H1 (cell line): ENCODE measurements at regions of chr11 and their contacts with region 1.

Region 1: GRCh38 chr11:10925144-10925926 is 67.5 kb upstream of the ZBED5 start:
- DNase-seq: no peak
- H3K4me3 ChIP-seq: no peak overlapping the region
- H3K27ac ChIP-seq: no peak overlapping the region
- H3K4me1 ChIP-seq: peaks cover 0 to 5% (median 1%) of the 10 kb centered on the region in 4 experiments; a peak in 3 of 7 replicates
- H3K27me3 ChIP-seq: peaks cover 0 to 7% (median 6%) of the 10 kb centered on the region in 4 experiments; a peak in 5 of 7 replicates
- CTCF ChIP-seq: no peak
- EP300 ChIP-seq: no peak
- POLR2A ChIP-seq: no peak
- RAD21 ChIP-seq: no peak

Region 2: DNA sequence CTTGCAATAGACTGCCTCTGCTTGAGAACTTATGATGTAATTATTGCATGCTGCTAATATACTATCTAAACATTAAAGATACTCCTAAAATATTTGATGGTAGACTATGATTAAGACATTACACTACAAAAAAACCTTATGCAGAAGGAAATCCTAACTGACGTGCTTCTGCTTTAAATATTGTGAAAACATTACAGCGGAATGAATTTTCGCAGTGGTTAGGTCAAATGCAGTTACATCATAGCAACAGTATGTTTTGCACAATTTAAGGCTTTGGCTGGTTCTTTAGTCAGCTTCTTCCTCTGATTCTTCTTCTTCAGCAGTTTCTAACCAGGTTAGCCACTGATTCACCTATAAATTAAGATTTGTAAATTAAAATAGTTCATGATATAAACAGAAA is 127.8 kb before region 1 on chr11:
- CTCF ChIA-PET with region 1: interaction called, 12 read pairs
- POLR2A ChIA-PET with region 1: interaction called, 11 read pairs
- DNase-seq: no peak
- H3K4me3 ChIP-seq: no peak overlapping the region
- H3K27ac ChIP-seq: no peak overlapping the region
- H3K4me1 ChIP-seq: peaks cover 0 to 3% (median 2%) of the 10 kb centered on the region in 4 experiments; a peak in 2 of 7 replicates
- H3K27me3 ChIP-seq: peaks cover 0 to 2% (median 0%) of the 10 kb centered on the region in 4 experiments; a peak in 2 of 7 replicates
- CTCF ChIP-seq: no peak
- EP300 ChIP-seq: no peak
- POLR2A ChIP-seq: no peak
- RAD21 ChIP-seq: no peak

Region 3: DNA sequence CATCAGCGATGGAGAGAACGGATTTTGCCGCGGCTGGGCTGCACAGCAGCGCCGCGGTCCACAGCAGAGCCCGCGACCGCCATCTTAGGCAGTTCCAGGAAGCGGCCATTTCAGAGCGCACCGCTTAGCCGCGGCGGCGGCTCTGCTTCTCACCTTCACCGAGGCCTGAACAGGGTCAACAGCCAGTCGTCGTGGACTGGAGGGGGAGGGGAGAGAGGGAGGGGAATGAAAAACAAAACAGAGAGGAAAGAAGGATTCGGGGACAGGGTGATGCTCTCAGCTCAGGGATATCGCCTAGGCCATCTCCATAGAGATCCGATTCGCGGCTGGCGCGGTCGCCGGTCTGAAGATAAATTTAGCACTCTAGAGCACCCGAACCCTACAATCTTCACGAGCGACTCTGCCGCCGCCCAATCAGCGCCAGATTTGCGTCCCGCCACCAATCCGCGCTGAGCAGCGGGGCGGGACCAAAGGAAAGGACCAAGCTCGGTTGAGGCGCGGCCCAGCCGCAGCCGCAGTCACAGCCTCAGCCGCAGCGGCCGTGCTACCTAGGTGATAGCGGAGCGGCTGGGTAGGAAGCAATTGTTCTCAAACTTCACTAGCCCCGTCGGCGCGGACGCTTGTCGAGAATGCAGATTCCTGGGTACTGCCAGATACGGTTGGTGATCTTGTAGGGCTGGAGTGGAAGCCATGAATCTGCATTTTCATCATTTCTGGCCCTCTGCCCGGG is 67.5 kb before region 1 on chr11 and contains the start of gene ZBED5:
- CTCF ChIA-PET with region 1: interaction called, 3 read pairs
- POLR2A ChIA-PET with region 1: interaction called, 27 read pairs
- DNase-seq: peak; percentile 92 to 94
- H3K4me3 ChIP-seq: peak within 1 kb of the TSS; percentile 91 to 98 (median 95)
- H3K27ac ChIP-seq: peak within 1 kb of the TSS; percentile 88
- H3K4me1 ChIP-seq: peaks cover 0 to 8% (median 2%) of the 10 kb centered on the region in 4 experiments; a peak in 3 of 7 replicates
- H3K27me3 ChIP-seq: no peaks in the 10 kb centered on the region
- CTCF ChIP-seq: no peak
- EP300 ChIP-seq: no peak
- POLR2A ChIP-seq: peak in 1 of 2 experiments; percentile 88; a peak in 2 of 3 replicates
- RAD21 ChIP-seq: 0 out of 4 replicates have a peak, but pooled peaks have one; percentile 4
- total RNA-seq, gene ZBED5: 48.7 and 54.2 TPM in 2 replicates

Region 4: GRCh38 chr11:10955616-10956015 is 30.3 kb after region 1 on chr11:
- CTCF ChIA-PET with region 1: no interaction called
- POLR2A ChIA-PET with region 1: no interaction called
- DNase-seq: no peak
- H3K4me3 ChIP-seq: no peak overlapping the region
- H3K27ac ChIP-seq: no peak overlapping the region
- H3K4me1 ChIP-seq: no peaks in the 10 kb centered on the region
- H3K27me3 ChIP-seq: no peaks in the 10 kb centered on the region
- CTCF ChIP-seq: no peak
- EP300 ChIP-seq: no peak
- POLR2A ChIP-seq: no peak
- RAD21 ChIP-seq: no peak